Posterior vena cava (tissue), 2 donors: ENCODE measurements at regions of chr1 and their contacts with region 1.

Region 1: DNA sequence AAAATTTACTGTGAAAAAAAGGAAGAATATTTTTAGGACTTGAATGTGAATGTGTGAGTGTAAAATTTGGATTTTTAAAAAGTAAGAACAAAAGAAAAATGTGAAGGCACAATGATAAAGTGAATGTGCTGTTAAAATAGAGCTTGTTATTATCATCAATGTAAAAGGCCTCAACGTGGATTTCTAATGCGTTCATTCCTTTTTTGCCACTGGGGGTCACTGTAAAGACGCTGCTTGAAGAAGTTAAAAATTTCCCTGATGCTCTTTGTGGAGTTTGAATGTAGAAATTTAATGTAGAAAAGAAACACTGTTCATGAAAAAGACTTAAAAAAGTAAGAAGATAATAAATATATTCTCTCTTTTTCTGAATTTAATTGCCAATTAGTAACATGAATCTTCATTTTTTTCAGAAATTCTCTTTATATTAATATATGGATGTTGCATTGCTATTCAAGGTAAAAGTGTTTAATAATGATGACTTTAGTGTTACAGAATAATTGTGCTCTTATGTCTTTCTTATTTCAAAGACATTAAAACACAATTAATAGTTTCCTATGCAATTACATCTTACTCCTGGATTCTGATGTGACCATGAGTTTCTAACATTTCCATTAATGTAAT is 161.5 kb downstream of the DNM3 start:
- DNase-seq: no peak

Region 2: DNA sequence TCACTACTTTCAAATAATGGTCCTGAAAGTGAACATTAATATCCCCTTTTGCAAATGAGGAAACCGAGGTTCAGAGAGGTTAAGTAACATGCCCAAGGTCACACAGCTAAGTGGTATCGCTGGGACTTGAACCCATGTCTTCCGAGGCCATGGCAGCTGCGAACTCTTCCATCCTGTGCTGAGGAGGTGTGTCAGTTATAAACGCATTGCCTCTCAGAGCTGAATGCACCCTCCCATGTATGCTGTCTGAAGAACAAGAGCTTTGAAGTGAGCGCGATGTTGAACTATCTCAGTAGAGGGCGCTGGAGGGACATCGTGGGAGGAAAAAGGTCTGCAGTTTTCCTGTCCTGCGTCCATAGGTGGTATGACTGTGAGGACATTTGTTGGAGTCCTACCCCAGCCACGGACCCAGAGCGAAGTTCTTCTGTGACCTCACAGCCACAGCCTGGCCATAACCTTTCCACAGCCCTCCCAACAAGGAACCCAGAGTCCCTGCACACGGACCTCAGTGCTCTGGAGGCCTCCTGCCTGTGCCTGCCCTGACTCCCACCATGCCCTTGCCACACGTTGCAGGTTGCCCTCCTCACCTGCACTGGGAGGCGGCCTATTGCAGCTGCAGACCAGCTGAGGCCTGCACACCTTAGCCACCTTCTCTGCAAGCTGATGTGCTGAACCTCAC is 357.9 kb before region 1 on chr1:
- intact Hi-C with region 1: loop called in 1 of 2 experiments (anchors 10 kb)
- DNase-seq: peak; percentile 87

Region 3: DNA sequence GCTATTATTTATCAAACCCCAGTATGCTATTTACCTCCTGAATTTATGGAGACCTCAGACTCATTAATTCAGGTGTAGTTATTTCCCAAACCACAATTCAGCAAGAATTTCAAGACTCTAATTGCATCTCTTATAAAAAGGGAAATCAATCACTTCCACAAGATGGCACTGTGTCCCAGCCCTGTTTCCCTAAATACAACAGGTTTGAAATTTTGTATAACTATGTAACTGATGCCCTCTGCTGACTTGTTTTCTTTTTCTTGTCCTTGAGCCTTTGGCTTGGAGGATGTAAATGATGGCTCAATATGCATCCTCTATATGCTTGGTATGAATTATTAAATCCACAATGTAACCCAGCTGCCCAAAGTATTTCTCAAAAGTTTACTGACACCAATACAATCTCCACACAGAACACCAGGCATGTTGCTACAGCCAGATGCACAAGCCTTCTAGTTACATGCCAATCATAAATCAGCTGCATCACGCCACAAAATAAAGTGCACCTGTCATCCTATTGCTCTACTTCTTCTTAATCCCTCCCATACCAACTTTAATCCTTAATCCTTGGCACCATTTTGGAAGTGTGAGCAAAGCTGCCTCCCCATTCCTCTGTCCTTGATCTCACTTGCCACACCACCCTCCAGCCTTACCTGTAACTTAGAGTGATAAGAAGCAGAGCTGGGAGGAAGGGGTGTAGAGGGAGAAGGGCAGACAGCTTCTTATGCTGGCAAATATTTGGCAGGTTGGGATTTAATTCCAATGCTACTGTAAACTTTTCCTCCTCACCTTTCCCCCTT is 426.7 kb after region 1 on chr1:
- intact Hi-C with region 1: loop called in 1 of 2 experiments (anchors 10 kb)
- DNase-seq: no peak

Region 4: DNA sequence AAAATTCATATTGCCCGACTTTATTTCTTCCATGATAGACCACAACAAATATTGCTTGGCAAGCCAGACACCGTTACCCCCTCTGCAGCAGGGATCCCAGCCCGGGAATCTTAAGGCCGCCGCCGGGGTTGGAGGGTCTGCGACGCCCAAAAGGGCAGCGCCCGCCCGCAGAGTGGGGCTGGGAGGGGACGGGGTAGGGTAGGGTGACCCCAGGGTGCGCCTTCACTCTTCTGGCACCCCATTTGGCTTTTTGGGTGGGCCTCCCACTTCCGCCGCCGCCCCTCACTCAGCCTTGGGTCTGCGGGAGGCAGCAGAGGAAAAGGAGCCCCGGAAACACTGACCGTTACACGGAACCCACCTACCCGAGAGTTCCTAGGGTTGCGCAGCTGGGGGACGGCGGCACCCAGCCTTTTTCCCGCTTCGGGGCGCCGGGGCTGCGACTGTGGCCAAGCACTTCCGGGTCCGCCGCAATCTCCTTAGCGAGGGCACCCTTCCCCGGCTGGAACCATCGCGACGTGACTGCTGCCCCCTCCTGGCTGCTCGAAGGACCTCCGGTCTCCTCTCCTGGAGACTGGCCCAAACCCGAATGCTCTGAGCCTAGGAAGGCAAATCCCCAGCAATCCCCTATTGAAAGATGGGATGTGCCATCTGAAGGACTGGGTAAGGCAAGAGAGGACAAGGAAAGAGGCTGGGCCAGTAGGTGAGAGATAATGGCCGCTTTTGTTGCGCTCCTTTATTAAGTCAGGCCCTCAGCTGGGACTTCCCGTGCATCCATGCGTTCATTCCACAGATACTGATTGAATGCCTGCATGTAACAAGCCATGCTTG is 441.0 kb after region 1 on chr1 and contains the start of gene PIGC:
- intact Hi-C with region 1: loop called in 1 of 2 experiments (anchors 5 kb)
- DNase-seq: peak; percentile 98
- total RNA-seq, gene PIGC: 18.4 to 22.3 TPM